Activated naive CD4-positive, alpha-beta T cell treated with anti-CD3 and anti-CD28 coated beads for 36 hours (primary cell): ENCODE measurements at regions of chr19 and their contacts with region 1.

Region 1: GRCh38 chr19:30649934-30650614 is 277.9 kb downstream of the ZNF536 start:
- DNase-seq: peak; percentile 65
- H3K4me3 Mint-ChIP-seq: no peak overlapping the region
- H3K27ac Mint-ChIP-seq: no peak overlapping the region
- H3K4me1 Mint-ChIP-seq: no peaks in the 10 kb centered on the region
- H3K27me3 Mint-ChIP-seq: peaks cover 29% of the 10 kb centered on the region

Region 2: DNA sequence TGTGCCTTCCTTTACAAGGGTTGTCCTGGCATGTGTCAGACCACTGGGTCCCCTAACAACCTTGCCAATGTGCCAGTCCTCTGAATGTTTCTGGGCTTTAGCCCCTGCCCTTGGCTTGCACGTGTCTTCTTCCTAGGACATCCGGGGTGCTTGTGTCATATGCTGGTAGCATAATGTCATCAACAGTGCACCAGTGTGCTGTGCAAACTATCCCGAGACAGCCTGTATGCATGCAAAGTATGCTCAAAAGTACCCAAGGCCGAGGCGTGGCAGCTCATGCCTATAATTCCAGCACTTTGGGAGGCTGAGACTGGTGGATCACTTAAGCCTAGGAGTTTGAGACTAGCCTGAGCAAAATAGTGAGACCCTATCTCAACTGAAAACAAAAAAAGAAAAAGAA is 914.3 kb before region 1 on chr19:
- CTCF ChIA-PET with region 1: no interaction called
- intact Hi-C with region 1: loop called (anchors 5 kb)
- DNase-seq: no peak
- H3K4me3 Mint-ChIP-seq: no peak overlapping the region
- H3K27ac Mint-ChIP-seq: no peak overlapping the region
- H3K4me1 Mint-ChIP-seq: no peaks in the 10 kb centered on the region
- H3K27me3 Mint-ChIP-seq: no peaks in the 10 kb centered on the region

Region 3: DNA sequence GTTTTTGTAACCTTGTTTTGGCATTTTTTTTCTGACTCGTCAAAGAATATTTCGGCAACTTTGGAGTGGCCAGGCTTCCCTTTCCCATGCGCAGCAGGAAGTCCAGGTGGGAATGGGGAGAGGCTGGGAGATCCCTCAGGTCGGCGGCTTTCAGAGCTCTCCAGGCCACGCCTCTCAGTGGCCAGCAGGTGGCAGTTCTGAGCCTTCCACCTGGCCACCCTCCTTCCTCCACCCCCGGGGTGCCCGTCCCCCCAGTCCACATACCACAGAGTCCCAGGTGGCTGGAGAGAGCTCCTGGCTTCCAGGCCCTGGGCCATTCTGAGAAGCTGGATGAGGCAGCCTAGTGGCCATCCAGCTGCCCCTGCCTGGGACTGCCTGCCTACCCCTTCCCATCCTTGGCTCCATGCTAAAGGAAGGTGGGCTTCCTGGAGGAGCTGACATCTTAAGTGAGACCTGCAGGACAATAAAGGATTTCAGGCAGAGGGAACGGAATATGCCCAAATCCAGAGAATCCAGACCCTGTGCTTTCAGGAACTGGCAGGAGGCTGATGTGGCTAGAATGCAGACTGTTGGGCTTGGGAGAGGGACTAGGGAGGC is 792.0 kb before region 1 on chr19:
- CTCF ChIA-PET with region 1: no interaction called
- intact Hi-C with region 1: loop called (anchors 5 kb)
- DNase-seq: peak; percentile 58
- H3K4me3 Mint-ChIP-seq: no peak overlapping the region
- H3K27ac Mint-ChIP-seq: no peak overlapping the region
- H3K4me1 Mint-ChIP-seq: peaks cover 3% of the 10 kb centered on the region
- H3K27me3 Mint-ChIP-seq: no peaks in the 10 kb centered on the region

Region 4: GRCh38 chr19:30227661-30228428 is 422.2 kb before region 1 on chr19:
- CTCF ChIA-PET with region 1: no interaction called
- intact Hi-C with region 1: loop called (anchors 1 kb)
- DNase-seq: peak; percentile 70
- H3K4me3 Mint-ChIP-seq: peak overlapping the region; percentile 79
- H3K27ac Mint-ChIP-seq: no peak overlapping the region
- H3K4me1 Mint-ChIP-seq: peaks cover 33% of the 10 kb centered on the region
- H3K27me3 Mint-ChIP-seq: peaks cover 58% of the 10 kb centered on the region

Region 5: GRCh38 chr19:30812099-30812678 is 162.1 kb after region 1 on chr19:
- CTCF ChIA-PET with region 1: no interaction called
- intact Hi-C with region 1: no loop called
- DNase-seq: no peak
- H3K4me3 Mint-ChIP-seq: no peak overlapping the region
- H3K27ac Mint-ChIP-seq: no peak overlapping the region
- H3K4me1 Mint-ChIP-seq: no peaks in the 10 kb centered on the region
- H3K27me3 Mint-ChIP-seq: peaks cover 13% of the 10 kb centered on the region